IMR-90 (cell line): ENCODE measurements at regions of chr16 and their contacts with region 1.

Region 1: DNA sequence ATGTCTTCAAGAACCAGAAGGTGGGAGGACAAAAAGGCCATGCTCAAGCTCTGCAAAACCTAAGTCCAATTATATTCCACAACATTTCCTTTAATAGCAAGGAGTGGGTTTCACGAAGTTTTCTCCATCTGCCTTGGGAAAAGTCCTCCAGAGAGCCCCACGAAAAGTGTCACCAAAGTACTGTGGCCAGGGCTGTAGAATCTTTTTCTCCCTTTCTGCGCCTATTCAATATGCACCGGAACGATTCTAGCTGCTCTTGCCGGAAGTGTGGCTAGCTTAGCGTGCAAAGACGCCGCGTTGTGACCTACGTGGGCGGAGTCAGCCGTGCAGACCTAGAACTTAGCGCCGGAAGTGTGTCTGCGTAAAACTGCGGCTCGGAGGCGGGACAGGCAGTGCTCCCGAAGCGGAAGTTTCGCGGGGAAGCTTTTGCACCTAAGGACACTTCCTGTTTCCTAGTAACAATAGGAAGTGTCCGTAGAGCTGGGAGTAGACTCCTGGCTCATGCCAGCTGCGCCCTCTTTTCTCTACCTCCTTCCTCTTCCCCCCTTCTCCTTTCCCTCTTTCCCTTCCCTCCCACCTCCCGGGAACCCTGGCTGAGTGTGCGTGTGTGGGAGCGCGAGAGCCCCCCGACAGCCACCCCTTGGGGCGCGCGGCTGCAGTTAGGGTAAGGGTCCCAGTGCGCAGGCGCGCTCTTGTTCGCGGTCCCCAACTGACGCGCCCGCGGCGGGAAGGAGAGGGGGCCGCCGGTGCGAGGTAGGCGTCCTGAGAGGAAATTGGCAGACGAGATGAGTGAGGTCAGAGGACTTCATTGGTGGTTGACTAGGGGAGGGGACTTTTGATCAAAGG is at the starts of genes ZNF646 and ZNF668:
- DNase-seq: peak; percentile 100
- ATAC-seq: peak; percentile 76
- H3K4me3 ChIP-seq: peak within 1 kb of the TSS; percentile 81
- H3K27ac ChIP-seq: peak within 1 kb of the TSS; percentile 90
- H3K4me1 ChIP-seq: peaks cover 6% of the 10 kb centered on the region
- H3K27me3 ChIP-seq: no peaks in the 10 kb centered on the region
- CTCF ChIP-seq: no peak
- POLR2A ChIP-seq: peak; percentile 72
- RAD21 ChIP-seq: no peak; the same call in 1 of the 2 replicates
- total RNA-seq, gene ZNF646: 6.8 and 6.9 TPM in 2 replicates
- total RNA-seq, gene ZNF668: 4.5 and 5.3 TPM in 2 replicates

Region 2: GRCh38 chr16:30874821-30875717 is 199.1 kb before region 1 on chr16:
- CTCF ChIA-PET with region 1: no interaction called
- POLR2A ChIA-PET with region 1: no interaction called
- dilution Hi-C with region 1: no loop called
- in situ Hi-C with region 1: no loop called
- intact Hi-C with region 1: no loop called
- DNase-seq: peak; percentile 88
- ATAC-seq: peak; percentile 95
- H3K4me3 ChIP-seq: peak overlapping the region; percentile 82
- H3K27ac ChIP-seq: peak overlapping the region; percentile 94
- H3K4me1 ChIP-seq: peaks cover 11% of the 10 kb centered on the region
- H3K27me3 ChIP-seq: no peaks in the 10 kb centered on the region
- CTCF ChIP-seq: 0 out of 2 replicates have a peak, but pooled peaks have one; percentile 5
- POLR2A ChIP-seq: peak; percentile 75
- RAD21 ChIP-seq: no peak

Region 3: DNA sequence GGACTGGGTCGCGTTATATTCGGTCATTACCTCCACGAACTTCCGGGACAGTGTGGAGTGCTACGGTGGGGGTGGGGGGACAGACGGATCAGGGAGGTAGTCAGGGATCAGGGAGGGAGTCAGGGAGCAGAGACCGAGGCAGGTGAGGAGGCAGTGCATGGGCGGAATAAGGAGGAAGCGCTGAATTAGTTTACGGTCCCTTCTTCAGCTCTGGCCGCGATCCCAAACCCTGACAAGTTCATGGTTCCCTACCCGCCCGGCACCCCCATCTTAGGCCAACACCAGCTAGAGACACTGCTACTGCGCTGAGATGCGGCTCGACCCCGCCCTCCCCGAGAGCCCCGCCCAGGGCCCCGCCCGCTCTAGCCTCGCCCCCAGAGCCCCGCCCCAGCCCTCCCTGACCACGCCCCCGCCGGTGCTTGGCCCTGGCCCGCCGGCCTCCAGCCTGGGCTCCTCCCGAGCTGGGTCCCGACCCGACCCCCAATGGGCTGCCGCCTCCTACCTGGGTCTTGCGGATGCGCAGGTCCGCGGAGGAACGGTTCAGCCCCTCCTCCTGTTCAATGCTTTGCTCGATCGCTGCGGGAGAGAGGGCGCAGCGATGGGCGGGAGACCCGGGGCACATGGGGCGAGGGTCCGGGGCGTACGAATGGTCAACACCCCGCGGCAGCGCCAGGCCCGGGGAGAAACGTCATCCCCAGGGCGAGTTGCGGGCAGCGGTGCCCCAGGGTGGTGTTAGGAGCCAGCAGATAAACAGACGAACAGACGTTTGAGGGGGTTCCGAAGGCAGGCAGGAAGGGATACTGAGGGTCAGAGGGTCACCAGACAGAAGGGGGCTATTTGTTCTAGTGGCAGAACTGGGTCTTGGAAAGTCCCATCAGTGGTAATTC is 76.9 kb before region 1 on chr16:
- CTCF ChIA-PET with region 1: no interaction called
- POLR2A ChIA-PET with region 1: interaction called, 3 read pairs
- dilution Hi-C with region 1: no loop called
- in situ Hi-C with region 1: no loop called
- intact Hi-C with region 1: loop called (anchors 5 kb)
- DNase-seq: peak; percentile 41
- ATAC-seq: peak; percentile 92
- H3K4me3 ChIP-seq: peak overlapping the region; percentile 54
- H3K27ac ChIP-seq: peak overlapping the region; percentile 69
- H3K4me1 ChIP-seq: peaks cover 27% of the 10 kb centered on the region
- H3K27me3 ChIP-seq: no peaks in the 10 kb centered on the region
- CTCF ChIP-seq: no peak
- POLR2A ChIP-seq: no peak
- RAD21 ChIP-seq: no peak

Region 4: GRCh38 chr16:31038993-31039392 is 35.2 kb before region 1 on chr16:
- CTCF ChIA-PET with region 1: no interaction called
- POLR2A ChIA-PET with region 1: no interaction called
- dilution Hi-C with region 1: no loop called
- in situ Hi-C with region 1: no loop called
- intact Hi-C with region 1: no loop called
- DNase-seq: no peak
- ATAC-seq: no peak
- H3K4me3 ChIP-seq: no peak overlapping the region
- H3K27ac ChIP-seq: no peak overlapping the region
- H3K4me1 ChIP-seq: peaks cover 6% of the 10 kb centered on the region
- H3K27me3 ChIP-seq: no peaks in the 10 kb centered on the region
- CTCF ChIP-seq: no peak
- POLR2A ChIP-seq: no peak
- RAD21 ChIP-seq: no peak

Region 5: GRCh38 chr16:31117391-31118197 is 43.4 kb after region 1 on chr16 and contains the start of gene KAT8:
- CTCF ChIA-PET with region 1: no interaction called
- POLR2A ChIA-PET with region 1: no interaction called
- dilution Hi-C with region 1: no loop called
- in situ Hi-C with region 1: no loop called
- intact Hi-C with region 1: no loop called
- DNase-seq: peak; percentile 97
- ATAC-seq: peak; percentile 95
- H3K4me3 ChIP-seq: peak within 1 kb of the TSS; percentile 66
- H3K27ac ChIP-seq: peak within 1 kb of the TSS; percentile 61
- H3K4me1 ChIP-seq: 0 out of 2 replicates have a peak, but pooled peaks cover 3% of the 10 kb centered on the region
- H3K27me3 ChIP-seq: no peaks in the 10 kb centered on the region
- CTCF ChIP-seq: no peak
- POLR2A ChIP-seq: peak; percentile 80
- RAD21 ChIP-seq: no peak
- total RNA-seq, gene KAT8: 18.9 and 19.4 TPM in 2 replicates

Region 6: DNA sequence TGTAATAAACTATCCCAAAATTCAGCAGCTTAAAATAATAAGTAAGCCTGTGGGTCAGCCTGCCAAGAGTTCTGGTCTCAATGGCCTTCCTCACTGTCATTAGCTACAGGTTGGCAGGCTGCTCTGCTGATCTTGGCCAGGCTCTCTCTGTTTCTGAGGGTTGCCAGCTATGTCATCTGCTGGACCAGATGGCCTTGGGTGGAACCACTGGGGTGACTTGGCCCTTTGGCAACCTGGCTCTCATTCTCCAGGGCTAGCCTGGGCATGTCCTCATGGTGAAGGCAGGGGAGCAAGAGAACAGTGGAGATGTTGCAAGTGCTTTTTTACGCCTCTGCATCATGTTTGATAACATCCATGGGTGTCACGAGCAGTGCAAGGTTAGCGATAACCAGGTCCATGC is 199.5 kb after region 1 on chr16:
- CTCF ChIA-PET with region 1: no interaction called
- POLR2A ChIA-PET with region 1: no interaction called
- dilution Hi-C with region 1: no loop called
- in situ Hi-C with region 1: no loop called
- intact Hi-C with region 1: no loop called
- DNase-seq: no peak
- ATAC-seq: no peak
- H3K4me3 ChIP-seq: no peak overlapping the region
- H3K27ac ChIP-seq: no peak overlapping the region
- H3K4me1 ChIP-seq: no peaks in the 10 kb centered on the region
- H3K27me3 ChIP-seq: peaks cover 3% of the 10 kb centered on the region
- CTCF ChIP-seq: no peak
- POLR2A ChIP-seq: no peak
- RAD21 ChIP-seq: no peak